ENCODE measurements at regions of chr14 and their contacts with region 1.

Region 1: GRCh38 chr14:68939893-68940613 is 39.0 kb downstream of the ACTN1 start:
- DNase-seq: peak; percentile 78
- ATAC-seq: peak; percentile 25
- H3K4me3 ChIP-seq: peak overlapping the region in 2 of 3 experiments; percentile 31 to 64; a peak in 3 of 6 replicates
- H3K27ac ChIP-seq: peak overlapping the region; percentile 78
- H3K4me1 ChIP-seq: peaks cover 93% of the 10 kb centered on the region
- H3K27me3 ChIP-seq: no peaks in the 10 kb centered on the region
- CTCF ChIP-seq: no peak
- EP300 ChIP-seq: peak in 1 of 2 experiments; percentile 20; a peak in 1 of 4 replicates
- POLR2A ChIP-seq: no peak
- RAD21 ChIP-seq: no peak

Region 2: DNA sequence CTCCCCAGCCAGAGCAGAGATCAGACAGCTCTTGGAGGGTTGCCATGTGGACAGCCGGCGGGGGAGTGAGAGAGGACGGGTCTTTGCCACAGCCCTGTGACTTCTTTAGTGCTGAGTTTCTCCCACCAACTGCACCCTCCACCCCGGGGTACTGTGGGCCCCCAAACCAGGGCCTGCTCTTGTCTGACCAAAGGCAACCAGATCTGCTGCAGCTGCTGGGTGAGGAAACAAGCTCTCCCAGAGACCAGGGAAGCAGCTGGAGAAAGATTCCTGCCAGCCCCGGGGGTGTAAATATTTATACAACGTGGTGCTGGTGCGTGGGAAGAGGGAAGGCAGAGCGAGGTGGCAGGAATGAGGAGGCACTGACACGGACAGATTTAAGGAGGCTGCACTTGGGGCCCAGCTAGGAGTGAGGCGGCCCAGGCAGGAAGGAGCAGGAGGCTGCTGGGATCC is 132.9 kb before region 1 on chr14:
- CTCF ChIA-PET with region 1: no interaction called
- POLR2A ChIA-PET with region 1: no interaction called
- in situ Hi-C with region 1: no loop called
- intact Hi-C with region 1: no loop called
- DNase-seq: peak; percentile 58
- ATAC-seq: peak; percentile 80
- H3K4me3 ChIP-seq: peak overlapping the region; percentile 27 to 64 (median 32)
- H3K27ac ChIP-seq: peak overlapping the region; percentile 54
- H3K4me1 ChIP-seq: peaks cover 22% of the 10 kb centered on the region
- H3K27me3 ChIP-seq: no peaks in the 10 kb centered on the region; a peak in 1 of 5 replicates
- CTCF ChIP-seq: no peak
- EP300 ChIP-seq: no peak
- POLR2A ChIP-seq: no peak
- RAD21 ChIP-seq: no peak

Region 3: GRCh38 chr14:68924186-68925158 is 15.6 kb before region 1 on chr14:
- CTCF ChIA-PET with region 1: no interaction called
- POLR2A ChIA-PET with region 1: interaction called, 11 read pairs
- in situ Hi-C with region 1: no loop called
- intact Hi-C with region 1: no loop called
- DNase-seq: peak; percentile 80
- ATAC-seq: peak; percentile 79
- H3K4me3 ChIP-seq: no peak overlapping the region
- H3K27ac ChIP-seq: peak overlapping the region; percentile 66
- H3K4me1 ChIP-seq: peaks cover 64% of the 10 kb centered on the region
- H3K27me3 ChIP-seq: no peaks in the 10 kb centered on the region
- CTCF ChIP-seq: no peak
- EP300 ChIP-seq: no peak
- POLR2A ChIP-seq: no peak
- RAD21 ChIP-seq: no peak

Region 4: GRCh38 chr14:68979021-68979782 is 39.1 kb after region 1 on chr14 and contains the start of gene ACTN1:
- CTCF ChIA-PET with region 1: interaction called, 3 read pairs
- POLR2A ChIA-PET with region 1: interaction called, 31 read pairs
- in situ Hi-C with region 1: loop called (anchors 5 kb)
- intact Hi-C with region 1: loop called (anchors 1 kb)
- DNase-seq: peak; percentile 94
- ATAC-seq: peak; percentile 78
- H3K4me3 ChIP-seq: peak within 1 kb of the TSS; percentile 95 to 97 (median 95)
- H3K27ac ChIP-seq: peak within 1 kb of the TSS; percentile 90
- H3K4me1 ChIP-seq: peaks cover 68% of the 10 kb centered on the region
- H3K27me3 ChIP-seq: no peaks in the 10 kb centered on the region
- CTCF ChIP-seq: peak; percentile 25; the same call in 1 of the 2 replicates
- EP300 ChIP-seq: no peak
- POLR2A ChIP-seq: peak; percentile 72 to 85
- RAD21 ChIP-seq: peak; percentile 17; the same call in 1 of the 2 replicates
- total RNA-seq, gene ACTN1: 58.6 and 62.4 TPM in 2 replicates

Region 5: DNA sequence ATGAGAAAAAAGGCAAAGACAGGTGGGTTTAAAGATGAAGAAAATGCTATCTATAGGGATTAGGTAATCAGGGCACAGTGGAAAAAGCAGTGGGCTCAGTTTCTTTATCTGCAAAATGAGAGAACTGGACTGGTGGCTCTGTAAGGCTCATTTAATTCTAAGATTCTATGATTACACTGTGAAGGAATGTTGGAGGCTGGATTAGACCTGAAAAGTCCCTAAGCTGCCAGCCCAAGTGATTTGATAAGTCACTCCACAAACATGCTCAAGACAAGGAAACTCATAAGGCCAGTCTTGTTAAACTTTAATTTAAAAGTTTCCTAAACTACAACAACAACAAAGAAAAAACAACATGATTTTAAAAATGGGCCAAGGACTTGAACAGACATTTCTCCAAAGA is 137.8 kb after region 1 on chr14:
- CTCF ChIA-PET with region 1: no interaction called
- POLR2A ChIA-PET with region 1: no interaction called
- in situ Hi-C with region 1: no loop called
- intact Hi-C with region 1: no loop called
- DNase-seq: no peak
- ATAC-seq: no peak
- H3K4me3 ChIP-seq: no peak overlapping the region
- H3K27ac ChIP-seq: no peak overlapping the region
- H3K4me1 ChIP-seq: peaks cover 21% of the 10 kb centered on the region
- H3K27me3 ChIP-seq: no peaks in the 10 kb centered on the region
- CTCF ChIP-seq: no peak
- EP300 ChIP-seq: no peak
- POLR2A ChIP-seq: no peak
- RAD21 ChIP-seq: no peak

Region 6: GRCh38 chr14:69741055-69741454 is 801.0 kb after region 1 on chr14:
- CTCF ChIA-PET with region 1: no interaction called
- POLR2A ChIA-PET with region 1: no interaction called
- in situ Hi-C with region 1: no loop called
- intact Hi-C with region 1: no loop called
- DNase-seq: peak; percentile 49
- ATAC-seq: no peak
- H3K4me3 ChIP-seq: no peak overlapping the region
- H3K27ac ChIP-seq: no peak overlapping the region
- H3K4me1 ChIP-seq: peaks cover 30% of the 10 kb centered on the region
- H3K27me3 ChIP-seq: no peaks in the 10 kb centered on the region
- CTCF ChIP-seq: no peak
- EP300 ChIP-seq: peak in 1 of 2 experiments; percentile 62; a peak in 1 of 4 replicates
- POLR2A ChIP-seq: no peak
- RAD21 ChIP-seq: no peak

Measured in HepG2 (cell line).